ENCODE measurements at regions of chr11 and their contacts with region 1.

Region 1: DNA sequence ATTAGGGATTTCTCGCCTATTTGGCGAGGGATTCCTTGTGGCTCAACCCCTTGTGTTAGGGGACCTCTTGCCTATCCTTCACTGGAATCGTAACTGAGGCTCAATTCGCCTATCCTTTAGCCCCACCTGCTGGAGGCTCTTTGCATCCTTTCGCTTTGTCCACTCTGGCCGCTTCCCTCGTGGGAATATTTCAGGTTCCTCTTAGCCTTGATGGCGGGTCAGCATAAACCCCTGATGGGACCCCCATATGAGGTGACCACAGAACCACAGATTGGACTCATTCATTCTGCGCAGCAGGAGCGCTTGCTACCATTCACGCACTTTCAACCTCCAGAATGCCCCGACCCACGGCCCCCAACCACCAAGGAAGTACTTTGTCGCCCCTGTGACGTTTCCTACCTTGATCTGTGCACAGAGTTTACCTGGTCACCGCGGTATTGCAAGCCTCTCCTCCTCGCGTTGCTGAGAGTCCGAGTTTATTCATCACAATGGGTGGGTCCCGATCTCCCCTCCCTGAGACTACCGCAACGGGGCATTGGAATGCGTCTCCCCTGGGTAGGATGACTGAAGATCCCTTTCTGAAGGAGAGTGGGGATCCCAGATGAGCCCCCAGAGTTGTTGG is at the start of gene OR52N2:
- DNase-seq: peak; percentile 46 to 85 (median 63)
- ATAC-seq: peak; percentile 78
- H3K4me3 ChIP-seq: peak within 1 kb of the TSS; percentile 55
- H3K4me3 Mint-ChIP-seq: peak within 1 kb of the TSS; percentile 89
- H3K27ac ChIP-seq: no peak within 1 kb of the TSS
- H3K27ac Mint-ChIP-seq: no peak within 1 kb of the TSS
- H3K4me1 ChIP-seq: peaks cover 8% of the 10 kb centered on the region
- H3K4me1 Mint-ChIP-seq: peaks cover 6% of the 10 kb centered on the region
- H3K27me3 ChIP-seq: peaks cover 0 to 8% of the 10 kb centered on the region in 2 experiments
- H3K27me3 Mint-ChIP-seq: peaks cover 38% of the 10 kb centered on the region
- CTCF ChIP-seq: peak; percentile 86
- total RNA-seq, gene OR52N2: not detected

Region 2: DNA sequence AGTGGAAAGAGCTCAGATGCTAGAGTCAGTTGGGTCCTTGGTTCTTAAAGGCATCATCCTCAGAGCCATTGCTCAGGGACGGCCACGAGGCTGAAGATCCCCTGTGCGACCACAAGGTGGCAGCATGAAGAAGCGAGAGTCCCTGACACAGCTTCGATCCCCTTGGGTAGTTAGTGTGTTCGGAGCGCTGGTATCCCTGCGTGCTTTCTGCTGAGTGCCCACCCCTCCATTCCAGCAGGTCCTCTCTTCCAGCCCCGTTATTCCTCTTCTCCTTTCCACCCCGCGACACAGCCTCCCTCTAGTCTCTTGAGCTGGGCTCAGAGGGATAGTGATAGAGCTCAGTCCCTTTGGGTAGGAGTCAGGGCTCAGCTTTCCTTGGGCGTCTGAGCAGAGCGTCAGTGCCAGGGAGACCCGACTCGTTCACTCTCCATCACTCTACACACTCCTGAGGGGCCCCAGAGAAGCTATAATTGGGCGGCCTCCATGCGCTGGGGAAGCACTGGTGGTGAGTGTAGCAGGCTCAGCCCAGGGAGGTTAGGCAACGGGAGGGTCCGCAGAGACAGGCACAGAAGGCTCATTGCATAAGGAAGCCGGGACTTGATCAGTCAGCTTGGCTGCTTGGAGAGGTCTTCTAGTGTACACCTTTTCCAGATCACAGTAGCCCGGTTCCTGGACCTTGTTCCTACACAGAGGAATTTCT is 1171.5 kb before region 1 on chr11 and contains the start of gene OR51D1:
- CTCF ChIA-PET with region 1: interaction called, 3 read pairs
- POLR2A ChIA-PET with region 1: no interaction called
- intact Hi-C with region 1: loop called in 1 of 2 experiments (anchors 1 kb)
- DNase-seq: peak; percentile 47 to 80 (median 57)
- ATAC-seq: peak; percentile 86
- H3K4me3 ChIP-seq: no peak within 1 kb of the TSS
- H3K4me3 Mint-ChIP-seq: no peak within 1 kb of the TSS
- H3K27ac ChIP-seq: no peak within 1 kb of the TSS
- H3K27ac Mint-ChIP-seq: no peak within 1 kb of the TSS
- H3K4me1 ChIP-seq: peaks cover 7% of the 10 kb centered on the region
- H3K4me1 Mint-ChIP-seq: no peaks in the 10 kb centered on the region
- H3K27me3 ChIP-seq: peaks cover 4 to 7% of the 10 kb centered on the region in 2 experiments
- H3K27me3 Mint-ChIP-seq: peaks cover 24% of the 10 kb centered on the region
- CTCF ChIP-seq: peak; percentile 87
- total RNA-seq, gene OR51D1: not detected

Region 3: DNA sequence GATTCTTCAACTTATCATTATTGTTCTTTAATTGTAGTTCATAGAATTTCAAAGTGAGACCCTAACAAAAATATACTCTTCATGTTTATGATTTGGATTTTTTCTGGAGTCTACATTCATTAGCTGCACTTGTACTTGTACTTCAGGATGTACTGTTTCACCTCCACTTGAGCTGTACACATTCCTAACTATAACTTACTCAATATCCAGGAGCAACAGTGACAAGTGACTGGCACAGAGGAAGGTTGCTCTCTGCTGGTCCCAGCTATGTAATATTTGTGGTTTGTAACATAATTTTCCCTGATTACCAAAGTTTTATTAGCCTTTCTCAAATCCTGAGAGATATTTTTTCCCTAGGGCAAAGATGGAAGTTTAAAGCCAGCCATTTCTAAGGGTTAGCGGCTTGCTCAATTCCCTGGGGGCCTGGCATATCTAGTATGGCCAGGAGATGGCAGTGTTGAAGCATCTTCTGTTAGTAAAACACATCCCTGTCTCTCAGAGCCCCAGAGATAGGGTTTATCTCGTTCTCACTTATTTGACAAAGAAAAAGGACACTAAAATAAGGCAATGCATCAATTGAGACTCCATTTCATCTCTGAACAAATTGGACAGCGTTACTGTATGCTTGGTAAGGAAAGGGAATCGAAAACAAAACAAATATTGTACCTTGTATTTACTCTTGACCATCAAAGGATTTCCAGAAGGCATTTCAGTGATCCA is 684.6 kb before region 1 on chr11:
- CTCF ChIA-PET with region 1: no interaction called
- POLR2A ChIA-PET with region 1: no interaction called
- intact Hi-C with region 1: loop called in 1 of 2 experiments (anchors 2 kb)
- DNase-seq: peak; percentile 3 to 61 (median 18)
- ATAC-seq: no peak
- H3K4me3 ChIP-seq: no peak overlapping the region
- H3K4me3 Mint-ChIP-seq: no peak overlapping the region
- H3K27ac ChIP-seq: no peak overlapping the region
- H3K27ac Mint-ChIP-seq: no peak overlapping the region
- H3K4me1 ChIP-seq: no peaks in the 10 kb centered on the region
- H3K4me1 Mint-ChIP-seq: no peaks in the 10 kb centered on the region
- H3K27me3 ChIP-seq: peaks cover 0 to 7% of the 10 kb centered on the region in 2 experiments
- H3K27me3 Mint-ChIP-seq: peaks cover 18% of the 10 kb centered on the region
- CTCF ChIP-seq: peak; percentile 71

Region 4: DNA sequence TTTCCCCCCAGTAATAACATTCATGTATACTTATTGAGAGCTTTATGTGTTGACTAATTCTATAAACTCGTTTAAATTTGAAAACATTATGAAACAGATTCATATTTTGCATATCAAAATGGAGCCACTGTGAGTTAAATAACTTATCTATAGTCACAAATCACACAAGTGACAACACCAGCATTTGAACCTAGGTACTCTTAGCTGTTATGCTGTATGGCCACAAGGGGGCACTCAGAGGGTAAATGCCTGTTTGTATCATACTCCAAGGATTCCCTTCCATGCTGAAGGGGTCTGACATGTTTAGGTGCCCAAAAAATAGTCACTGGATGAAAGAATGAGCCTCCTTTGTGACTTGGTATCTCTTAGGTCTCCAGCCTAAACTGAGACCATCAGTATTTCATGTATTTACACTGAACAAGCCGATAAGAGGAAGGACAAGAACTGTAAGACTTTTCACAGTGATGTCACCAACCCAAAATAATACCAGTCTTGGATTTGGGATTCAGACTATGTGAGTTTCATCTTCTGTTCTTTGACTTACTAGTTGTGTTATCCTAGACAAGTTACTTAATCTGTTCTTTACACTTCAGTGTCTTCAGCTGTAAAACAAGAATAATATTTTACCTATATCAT is 332.3 kb before region 1 on chr11:
- CTCF ChIA-PET with region 1: no interaction called
- POLR2A ChIA-PET with region 1: no interaction called
- intact Hi-C with region 1: loop called in 1 of 2 experiments (anchors 1 kb)
- DNase-seq: peak in 13 of 14 experiments; percentile 2 to 64 (median 7)
- ATAC-seq: no peak
- H3K4me3 ChIP-seq: no peak overlapping the region
- H3K4me3 Mint-ChIP-seq: no peak overlapping the region
- H3K27ac ChIP-seq: no peak overlapping the region
- H3K27ac Mint-ChIP-seq: no peak overlapping the region
- H3K4me1 ChIP-seq: no peaks in the 10 kb centered on the region
- H3K4me1 Mint-ChIP-seq: no peaks in the 10 kb centered on the region
- H3K27me3 ChIP-seq: peaks cover 5 to 7% of the 10 kb centered on the region in 2 experiments
- H3K27me3 Mint-ChIP-seq: peaks cover 33% of the 10 kb centered on the region
- CTCF ChIP-seq: peak; percentile 73

Region 5: GRCh38 chr11:5600374-5600851 is 208.2 kb before region 1 on chr11:
- CTCF ChIA-PET with region 1: no interaction called
- POLR2A ChIA-PET with region 1: no interaction called
- intact Hi-C with region 1: loop called (anchors 1 kb)
- DNase-seq: peak; percentile 40 to 78 (median 53)
- ATAC-seq: peak; percentile 90
- H3K4me3 ChIP-seq: no peak overlapping the region
- H3K4me3 Mint-ChIP-seq: no peak overlapping the region
- H3K27ac ChIP-seq: no peak overlapping the region
- H3K27ac Mint-ChIP-seq: no peak overlapping the region
- H3K4me1 ChIP-seq: peaks cover 8% of the 10 kb centered on the region
- H3K4me1 Mint-ChIP-seq: peaks cover 12% of the 10 kb centered on the region
- H3K27me3 ChIP-seq: peaks cover 0 to 8% of the 10 kb centered on the region in 2 experiments
- H3K27me3 Mint-ChIP-seq: peaks cover 20% of the 10 kb centered on the region
- CTCF ChIP-seq: peak; percentile 84

Measured in CD4-positive, alpha-beta T cell (primary cell).